CD8-positive, alpha-beta memory T cell (primary cell): ENCODE measurements at regions of chr1 and their contacts with region 1.

Region 1: GRCh38 chr1:51463561-51463960 is 55.5 kb downstream of the EPS15 start:
- DNase-seq: no peak
- H3K4me3 ChIP-seq: no peak overlapping the region
- H3K4me3 Mint-ChIP-seq: no peak overlapping the region
- H3K27ac ChIP-seq: no peak overlapping the region
- H3K27ac Mint-ChIP-seq: no peak overlapping the region
- H3K4me1 ChIP-seq: no peaks in the 10 kb centered on the region
- H3K4me1 Mint-ChIP-seq: peaks cover 5 to 14% (median 9%) of the 10 kb centered on the region in 3 donors
- H3K27me3 ChIP-seq: no peaks in the 10 kb centered on the region
- H3K27me3 Mint-ChIP-seq: no peaks in the 10 kb centered on the region

Region 2: DNA sequence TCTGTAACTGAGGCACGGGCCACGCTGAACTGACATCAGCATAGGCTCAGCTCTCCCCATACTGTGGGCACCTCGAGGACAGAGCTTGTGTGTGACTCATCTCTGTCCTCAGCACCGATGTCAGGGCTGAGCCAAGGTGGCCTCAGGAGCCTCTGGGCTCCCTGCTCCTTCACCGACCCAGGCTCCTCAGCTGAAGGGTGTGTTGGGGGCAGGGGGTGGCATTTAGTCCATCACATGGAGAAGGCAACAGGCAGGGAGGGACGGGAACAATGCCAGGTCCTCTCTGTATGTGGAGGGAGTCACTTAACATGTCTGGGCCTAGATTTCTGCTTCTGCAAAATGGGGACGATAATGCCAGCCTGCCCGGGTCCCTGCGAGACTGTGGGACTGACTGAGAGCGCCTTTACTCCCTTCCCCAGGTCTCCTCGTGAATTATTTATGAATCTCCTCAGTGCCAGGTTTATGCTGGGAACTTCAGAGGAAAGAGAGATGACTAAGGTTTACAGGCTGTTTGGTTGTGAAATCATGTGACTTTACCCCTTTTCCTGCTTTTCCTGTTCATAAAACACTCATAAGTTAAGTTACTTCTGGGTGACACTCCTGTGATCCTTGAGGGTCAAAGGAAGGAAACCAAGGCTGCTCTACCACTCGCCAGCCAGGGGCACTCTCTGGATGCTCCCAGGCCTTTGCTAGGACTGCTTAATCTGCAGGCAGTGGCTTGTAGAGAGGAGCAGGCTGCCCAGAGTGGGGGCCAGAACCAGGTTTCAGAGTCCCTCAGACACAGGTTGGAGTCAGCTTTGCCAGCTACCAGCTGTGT is 149.4 kb before region 1 on chr1:
- CTCF ChIA-PET with region 1: no interaction called
- POLR2A ChIA-PET with region 1: no interaction called
- DNase-seq: no peak
- H3K4me3 ChIP-seq: no peak overlapping the region
- H3K4me3 Mint-ChIP-seq: no peak overlapping the region
- H3K27ac ChIP-seq: no peak overlapping the region
- H3K27ac Mint-ChIP-seq: peak overlapping the region in 3 of 8 donors; percentile 12 to 56 (median 35)
- H3K4me1 ChIP-seq: no peaks in the 10 kb centered on the region
- H3K4me1 Mint-ChIP-seq: peaks cover 0 to 7% (median 0%) of the 10 kb centered on the region in 3 donors
- H3K27me3 ChIP-seq: no peaks in the 10 kb centered on the region
- H3K27me3 Mint-ChIP-seq: peaks cover 0 to 11% of the 10 kb centered on the region in 2 donors

Region 3: GRCh38 chr1:51512606-51513005 is 49.0 kb after region 1 on chr1:
- CTCF ChIA-PET with region 1: no interaction called
- POLR2A ChIA-PET with region 1: interaction called, 22 read pairs
- DNase-seq: no peak
- H3K4me3 ChIP-seq: no peak overlapping the region
- H3K4me3 Mint-ChIP-seq: peak overlapping the region in 6 of 7 donors; percentile 4 to 46 (median 17)
- H3K27ac ChIP-seq: no peak overlapping the region
- H3K27ac Mint-ChIP-seq: peak overlapping the region in 4 of 8 donors; percentile 3 to 51 (median 28)
- H3K4me1 ChIP-seq: peaks cover 49% of the 10 kb centered on the region
- H3K4me1 Mint-ChIP-seq: peaks cover 78 to 94% (median 94%) of the 10 kb centered on the region in 3 donors
- H3K27me3 ChIP-seq: no peaks in the 10 kb centered on the region
- H3K27me3 Mint-ChIP-seq: no peaks in the 10 kb centered on the region